Naive thymus-derived CD4-positive, alpha-beta T cell (primary cell): ENCODE measurements at regions of chr1 and their contacts with region 1.

Region 1: DNA sequence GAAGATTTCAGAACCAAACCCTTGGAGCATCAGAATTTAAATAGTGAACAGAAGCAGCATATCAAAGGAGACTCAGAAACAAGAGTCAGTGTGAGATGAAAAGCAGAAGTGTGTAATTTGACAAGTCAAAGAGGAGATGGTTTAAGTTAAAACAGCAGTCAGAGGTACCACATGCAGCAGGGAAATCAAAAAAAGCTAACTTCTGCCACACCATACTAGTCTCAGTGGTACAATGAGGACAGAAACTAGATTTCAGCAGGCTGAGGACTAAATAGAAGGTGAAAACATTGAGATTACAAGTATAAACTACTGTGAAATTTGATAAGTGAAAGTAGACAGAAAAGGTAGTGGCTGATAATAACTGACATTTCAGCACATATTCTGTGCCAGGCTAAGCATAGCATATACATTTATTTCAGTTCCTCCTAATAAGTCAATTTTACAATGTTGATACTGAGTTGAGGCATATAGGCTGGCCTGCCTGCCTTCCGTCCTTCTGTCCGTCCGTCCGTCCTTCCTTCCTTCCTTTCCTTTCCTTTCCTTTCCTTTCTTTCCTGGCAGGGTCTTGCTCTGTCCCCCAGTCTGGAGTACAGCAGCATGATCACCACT is 12.6 kb downstream of the SUCO start:
- DNase-seq: no peak
- ATAC-seq: peak; percentile 38
- H3K4me3 ChIP-seq: no peak overlapping the region
- H3K4me3 Mint-ChIP-seq: no peak overlapping the region
- H3K27ac ChIP-seq: no peak overlapping the region
- H3K27ac Mint-ChIP-seq: no peak overlapping the region
- H3K4me1 ChIP-seq: peaks cover 18 to 25% of the 10 kb centered on the region in 2 donors
- H3K4me1 Mint-ChIP-seq: peaks cover 17 to 50% (median 40%) of the 10 kb centered on the region in 7 donors
- H3K27me3 ChIP-seq: no peaks in the 10 kb centered on the region
- H3K27me3 Mint-ChIP-seq: no peaks in the 10 kb centered on the region

Region 2: DNA sequence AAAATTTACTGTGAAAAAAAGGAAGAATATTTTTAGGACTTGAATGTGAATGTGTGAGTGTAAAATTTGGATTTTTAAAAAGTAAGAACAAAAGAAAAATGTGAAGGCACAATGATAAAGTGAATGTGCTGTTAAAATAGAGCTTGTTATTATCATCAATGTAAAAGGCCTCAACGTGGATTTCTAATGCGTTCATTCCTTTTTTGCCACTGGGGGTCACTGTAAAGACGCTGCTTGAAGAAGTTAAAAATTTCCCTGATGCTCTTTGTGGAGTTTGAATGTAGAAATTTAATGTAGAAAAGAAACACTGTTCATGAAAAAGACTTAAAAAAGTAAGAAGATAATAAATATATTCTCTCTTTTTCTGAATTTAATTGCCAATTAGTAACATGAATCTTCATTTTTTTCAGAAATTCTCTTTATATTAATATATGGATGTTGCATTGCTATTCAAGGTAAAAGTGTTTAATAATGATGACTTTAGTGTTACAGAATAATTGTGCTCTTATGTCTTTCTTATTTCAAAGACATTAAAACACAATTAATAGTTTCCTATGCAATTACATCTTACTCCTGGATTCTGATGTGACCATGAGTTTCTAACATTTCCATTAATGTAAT is 542.7 kb before region 1 on chr1:
- CTCF ChIA-PET with region 1: no interaction called
- POLR2A ChIA-PET with region 1: no interaction called
- intact Hi-C with region 1: loop called in 1 of 2 experiments (anchors 10 kb)
- DNase-seq: peak in 7 of 9 donors; percentile 8 to 53 (median 37)
- ATAC-seq: peak; percentile 55
- H3K4me3 ChIP-seq: no peak overlapping the region
- H3K4me3 Mint-ChIP-seq: no peak overlapping the region
- H3K27ac ChIP-seq: no peak overlapping the region
- H3K27ac Mint-ChIP-seq: no peak overlapping the region
- H3K4me1 ChIP-seq: no peaks in the 10 kb centered on the region
- H3K4me1 Mint-ChIP-seq: peaks cover 0 to 8% (median 3%) of the 10 kb centered on the region in 7 donors
- H3K27me3 ChIP-seq: no peaks in the 10 kb centered on the region
- H3K27me3 Mint-ChIP-seq: no peaks in the 10 kb centered on the region

Region 3: DNA sequence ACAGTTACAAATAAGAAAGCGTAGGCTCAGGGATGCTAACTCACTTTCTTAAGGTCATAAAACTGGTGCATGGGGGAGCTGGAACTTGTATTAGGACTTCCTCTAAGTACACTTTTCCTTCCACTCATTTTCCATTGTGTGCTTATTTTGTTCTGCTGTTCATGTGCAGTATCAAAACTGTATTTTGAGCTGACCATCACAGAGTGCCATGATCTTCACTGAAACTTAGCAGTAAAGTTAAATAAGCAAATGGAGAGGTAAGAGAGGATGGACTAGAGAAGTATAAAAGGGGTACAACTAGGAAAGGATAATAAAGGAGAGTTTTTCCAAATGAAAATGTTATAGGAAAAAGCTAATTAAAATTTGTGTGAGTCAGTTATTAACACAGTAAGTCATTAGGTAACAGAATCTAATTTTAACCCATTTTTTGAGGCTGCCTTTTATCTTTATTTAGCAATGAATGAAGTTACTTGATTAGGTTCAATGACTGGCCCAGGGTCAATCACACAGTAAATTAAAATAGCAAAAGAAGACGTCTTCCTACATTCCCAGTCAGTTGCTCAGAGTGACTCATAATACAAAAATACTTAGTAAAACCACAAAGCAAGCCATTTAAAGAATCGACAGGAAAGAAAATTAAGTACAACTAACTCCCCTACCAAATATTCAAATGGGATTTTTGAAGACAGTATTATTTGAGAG is 290.8 kb before region 1 on chr1:
- CTCF ChIA-PET with region 1: no interaction called
- POLR2A ChIA-PET with region 1: no interaction called
- intact Hi-C with region 1: no loop called
- DNase-seq: no peak
- ATAC-seq: no peak
- H3K4me3 ChIP-seq: no peak overlapping the region
- H3K4me3 Mint-ChIP-seq: peak overlapping the region in 1 of 10 donors; percentile 30
- H3K27ac ChIP-seq: no peak overlapping the region
- H3K27ac Mint-ChIP-seq: peak overlapping the region in 4 of 9 donors; percentile 13 to 73 (median 24)
- H3K4me1 ChIP-seq: no peaks in the 10 kb centered on the region
- H3K4me1 Mint-ChIP-seq: peaks cover 2 to 22% (median 18%) of the 10 kb centered on the region in 7 donors
- H3K27me3 ChIP-seq: no peaks in the 10 kb centered on the region
- H3K27me3 Mint-ChIP-seq: no peaks in the 10 kb centered on the region

Region 4: GRCh38 chr1:172582893-172583292 is 37.4 kb after region 1 on chr1:
- CTCF ChIA-PET with region 1: no interaction called
- POLR2A ChIA-PET with region 1: no interaction called
- intact Hi-C with region 1: loop called in 1 of 2 experiments (anchors 5 kb)
- DNase-seq: no peak
- ATAC-seq: no peak
- H3K4me3 ChIP-seq: no peak overlapping the region
- H3K4me3 Mint-ChIP-seq: no peak overlapping the region
- H3K27ac ChIP-seq: no peak overlapping the region
- H3K27ac Mint-ChIP-seq: peak overlapping the region in 2 of 9 donors; percentile 38 to 43
- H3K4me1 ChIP-seq: no peaks in the 10 kb centered on the region
- H3K4me1 Mint-ChIP-seq: peaks cover 0 to 22% (median 6%) of the 10 kb centered on the region in 7 donors
- H3K27me3 ChIP-seq: no peaks in the 10 kb centered on the region
- H3K27me3 Mint-ChIP-seq: no peaks in the 10 kb centered on the region

Region 5: GRCh38 chr1:172588296-172589291 is 43.1 kb after region 1 on chr1:
- CTCF ChIA-PET with region 1: no interaction called
- POLR2A ChIA-PET with region 1: no interaction called
- intact Hi-C with region 1: loop called in 1 of 2 experiments (anchors 5 kb)
- DNase-seq: no peak
- ATAC-seq: peak; percentile 74
- H3K4me3 ChIP-seq: no peak overlapping the region
- H3K4me3 Mint-ChIP-seq: peak overlapping the region in 1 of 10 donors; percentile 6
- H3K27ac ChIP-seq: no peak overlapping the region
- H3K27ac Mint-ChIP-seq: peak overlapping the region in 2 of 9 donors; percentile 18 to 34
- H3K4me1 ChIP-seq: no peaks in the 10 kb centered on the region
- H3K4me1 Mint-ChIP-seq: peaks cover 0 to 16% (median 10%) of the 10 kb centered on the region in 7 donors
- H3K27me3 ChIP-seq: no peaks in the 10 kb centered on the region
- H3K27me3 Mint-ChIP-seq: no peaks in the 10 kb centered on the region